Naive thymus-derived CD8-positive, alpha-beta T cell (primary cell): ENCODE measurements at regions of chr17 and their contacts with region 1.

Region 1: GRCh38 chr17:17681187-17681848 is at the start of gene RAI1:
- DNase-seq: peak; percentile 59 to 87 (median 78)
- ATAC-seq: peak; percentile 61 to 63
- H3K4me3 Mint-ChIP-seq: peak within 1 kb of the TSS; percentile 70 to 93 (median 86)
- H3K27ac Mint-ChIP-seq: peak within 1 kb of the TSS in 8 of 10 donors; percentile 48 to 93 (median 88)
- H3K4me1 Mint-ChIP-seq: peaks cover 19 to 51% (median 43%) of the 10 kb centered on the region in 4 donors
- H3K27me3 Mint-ChIP-seq: no peaks in the 10 kb centered on the region
- polyA plus RNA-seq, gene RAI1: 1.5 to 4.0 (median 2.3) TPM

Region 2: DNA sequence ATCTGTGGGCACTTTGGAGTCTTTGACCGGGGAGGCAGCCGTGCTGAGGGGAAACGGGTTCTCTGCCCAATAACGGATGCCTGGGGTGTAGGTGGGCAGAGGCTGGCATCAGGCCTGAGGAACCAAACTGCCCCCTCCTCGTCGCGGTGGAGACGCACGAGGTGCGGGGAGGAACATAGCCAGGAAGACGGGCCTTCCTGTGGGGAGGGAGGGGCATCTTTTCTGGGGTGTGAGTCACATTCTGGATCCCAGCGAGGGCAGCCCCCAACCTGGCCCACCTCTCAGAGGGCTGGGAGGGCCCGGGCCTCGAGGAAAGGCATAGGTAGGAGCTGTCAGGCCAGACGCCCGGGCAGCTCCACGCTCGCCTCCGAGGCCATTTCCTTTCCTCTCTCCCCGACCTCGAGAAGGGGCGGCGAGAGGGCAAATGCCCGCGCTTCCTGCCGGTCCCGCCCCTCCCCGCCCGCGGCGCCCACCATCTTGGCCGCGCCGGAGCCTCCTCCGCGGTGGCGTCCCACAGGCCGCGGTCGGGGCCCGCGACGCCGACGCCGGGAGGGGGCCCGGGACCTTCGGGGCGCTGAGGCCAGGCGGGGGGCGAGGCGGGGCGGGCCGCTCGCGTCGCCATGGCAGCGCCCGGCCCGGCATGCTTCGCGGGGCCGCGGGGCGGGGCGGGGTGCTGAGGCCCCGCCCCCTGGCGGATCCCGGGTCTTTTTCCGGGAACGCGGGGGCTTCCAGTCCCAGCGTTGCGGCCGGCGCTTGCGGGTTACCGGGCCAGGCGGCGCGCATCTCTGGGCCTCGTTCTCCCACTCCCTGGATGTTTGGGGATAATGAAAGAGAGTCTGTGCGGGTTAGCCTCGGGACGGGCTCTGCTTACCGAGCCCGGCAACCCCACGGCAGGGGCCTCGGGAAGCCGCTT is 13.1 kb after region 1 on chr17:
- POLR2A ChIA-PET with region 1: interaction called, 60 read pairs
- DNase-seq: peak; percentile 47 to 87 (median 76)
- ATAC-seq: peak; percentile 68 to 73
- H3K4me3 Mint-ChIP-seq: peak overlapping the region; percentile 81 to 96 (median 91)
- H3K27ac Mint-ChIP-seq: peak overlapping the region; percentile 94 to 100 (median 99)
- H3K4me1 Mint-ChIP-seq: peaks cover 51 to 87% (median 73%) of the 10 kb centered on the region in 4 donors
- H3K27me3 Mint-ChIP-seq: no peaks in the 10 kb centered on the region

Region 3: GRCh38 chr17:17859909-17860765 is 178.8 kb after region 1 on chr17:
- POLR2A ChIA-PET with region 1: interaction called, 11 read pairs
- DNase-seq: peak; percentile 58 to 81 (median 70)
- ATAC-seq: peak; percentile 92 to 96
- H3K4me3 Mint-ChIP-seq: no peak overlapping the region
- H3K27ac Mint-ChIP-seq: peak overlapping the region in 6 of 10 donors; percentile 20 to 58 (median 40)
- H3K4me1 Mint-ChIP-seq: peaks cover 22 to 66% (median 44%) of the 10 kb centered on the region in 4 donors
- H3K27me3 Mint-ChIP-seq: no peaks in the 10 kb centered on the region